ENCODE measurements at regions of chr2 and their contacts with region 1.

Region 1: DNA sequence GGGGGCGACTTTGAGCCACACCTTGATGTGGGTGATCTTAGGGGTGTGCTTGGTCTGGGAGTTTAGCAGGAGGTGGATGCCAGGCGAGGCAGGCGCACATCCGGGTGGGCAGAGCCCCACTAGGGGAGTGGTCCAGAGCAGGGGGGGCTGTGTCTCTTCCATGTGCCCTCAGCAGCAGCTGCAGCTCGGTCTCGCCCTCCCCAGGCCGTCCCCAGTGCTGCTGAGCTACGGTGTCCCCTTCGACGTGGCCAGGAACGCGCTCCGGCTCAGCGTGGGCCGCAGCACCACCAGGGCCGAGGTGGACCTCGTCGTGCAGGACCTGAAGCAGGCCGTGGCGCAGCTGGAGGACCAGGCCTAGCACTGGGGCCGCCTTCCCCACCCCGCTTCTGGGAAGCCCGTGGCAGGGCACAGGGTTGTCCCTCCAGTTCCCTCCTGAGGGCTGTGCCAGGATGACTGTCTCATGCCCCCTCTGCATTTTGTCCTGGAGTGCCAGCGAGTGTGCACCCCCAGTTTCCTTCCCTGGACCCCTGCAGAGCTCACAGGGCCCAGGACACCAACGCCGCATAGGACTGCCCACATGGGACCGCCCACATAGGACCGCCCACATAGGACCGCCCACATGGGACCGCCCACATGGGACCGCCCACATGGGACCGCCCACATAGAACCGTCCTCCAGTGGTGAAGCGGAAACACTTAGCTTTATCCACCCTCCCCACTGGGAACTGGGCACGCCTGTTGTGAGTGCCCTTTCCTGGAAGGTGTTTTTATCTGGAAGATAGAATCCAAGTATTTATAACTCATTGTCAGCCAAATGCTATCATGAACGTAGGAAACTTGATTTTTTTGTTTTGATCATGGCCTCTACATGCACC is 1.9 kb upstream of the ESPNL start:
- DNase-seq: peak in 2 of 35 experiments; percentile 26 to 35
- ATAC-seq: peak in 3 of 4 experiments; percentile 50 to 76 (median 56)
- H3K4me3 ChIP-seq: no peak overlapping the region
- H3K4me3 Mint-ChIP-seq: no peak overlapping the region
- H3K27ac ChIP-seq: no peak overlapping the region
- H3K27ac Mint-ChIP-seq: no peak overlapping the region
- H3K4me1 ChIP-seq: no peaks in the 10 kb centered on the region
- H3K4me1 Mint-ChIP-seq: peaks cover 0 to 6% (median 0%) of the 10 kb centered on the region in 3 donors
- H3K27me3 ChIP-seq: peaks cover 0 to 1% of the 10 kb centered on the region in 2 experiments
- H3K27me3 Mint-ChIP-seq: no peaks in the 10 kb centered on the region

Region 2: DNA sequence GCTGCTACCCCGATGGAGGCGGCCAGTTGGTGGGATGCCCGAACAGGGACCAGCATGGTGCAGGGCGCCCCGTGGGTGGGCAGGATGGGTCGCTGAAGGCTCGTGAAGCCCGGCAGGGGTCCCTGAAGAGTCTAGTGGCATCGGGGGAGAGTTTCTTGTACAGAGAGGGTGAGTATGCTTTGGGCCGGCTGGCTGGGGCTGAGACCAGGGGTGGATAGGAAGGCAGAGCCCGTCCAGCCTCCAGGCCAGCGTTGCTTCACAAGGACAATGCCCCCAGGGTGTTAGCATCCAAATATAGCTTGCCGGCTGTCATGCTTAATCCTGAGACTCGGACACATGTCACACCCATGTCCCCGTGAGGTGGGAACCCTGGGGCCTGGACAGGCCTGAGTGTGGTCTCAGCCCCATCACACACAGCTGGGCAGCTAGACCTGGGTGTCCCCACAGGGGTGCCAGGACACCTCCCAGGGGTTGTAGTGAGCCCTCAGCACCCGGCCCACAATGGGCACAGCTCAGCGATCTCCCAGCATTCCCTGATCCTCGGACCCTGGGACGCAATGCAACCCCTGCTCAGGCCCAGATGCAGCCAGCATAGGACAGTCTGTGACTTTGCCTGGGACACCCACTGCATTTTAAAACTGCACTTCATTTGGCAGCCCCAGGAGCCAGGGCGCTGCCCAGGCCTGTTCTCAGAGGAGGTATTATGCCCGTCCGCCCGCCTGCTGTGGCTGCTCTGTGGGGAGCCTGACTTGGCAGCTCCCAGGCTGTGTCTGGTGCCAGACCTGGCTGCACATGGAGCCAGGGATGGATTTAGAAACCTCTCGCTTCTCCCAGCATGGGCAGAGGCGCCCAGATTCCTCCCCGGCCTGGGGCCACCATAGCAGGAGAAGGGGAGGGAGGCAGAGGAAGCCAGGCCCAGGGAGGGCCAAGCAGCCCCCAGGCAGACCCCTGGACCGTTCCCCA is 202.4 kb before region 1 on chr2:
- CTCF ChIA-PET with region 1: no interaction called
- POLR2A ChIA-PET with region 1: no interaction called
- DNase-seq: no peak
- ATAC-seq: no peak
- H3K4me3 ChIP-seq: no peak overlapping the region
- H3K4me3 Mint-ChIP-seq: no peak overlapping the region
- H3K27ac ChIP-seq: no peak overlapping the region
- H3K27ac Mint-ChIP-seq: no peak overlapping the region
- H3K4me1 ChIP-seq: peaks cover 9 to 33% of the 10 kb centered on the region in 2 experiments
- H3K4me1 Mint-ChIP-seq: peaks cover 38 to 52% (median 43%) of the 10 kb centered on the region in 3 donors
- H3K27me3 ChIP-seq: no peaks in the 10 kb centered on the region
- H3K27me3 Mint-ChIP-seq: no peaks in the 10 kb centered on the region

Region 3: GRCh38 chr2:238108423-238109183 is 10.4 kb after region 1 on chr2:
- CTCF ChIA-PET with region 1: no interaction called
- POLR2A ChIA-PET with region 1: interaction called in 1 of 2 experiments, 16 read pairs
- DNase-seq: peak in 6 of 35 experiments; percentile 3 to 18 (median 12)
- ATAC-seq: peak in 2 of 4 experiments; percentile 43 to 58
- H3K4me3 ChIP-seq: no peak overlapping the region
- H3K4me3 Mint-ChIP-seq: peak overlapping the region in 1 of 3 donors; percentile 24
- H3K27ac ChIP-seq: no peak overlapping the region
- H3K27ac Mint-ChIP-seq: no peak overlapping the region
- H3K4me1 ChIP-seq: peaks cover 7 to 10% of the 10 kb centered on the region in 2 experiments
- H3K4me1 Mint-ChIP-seq: peaks cover 5 to 19% (median 12%) of the 10 kb centered on the region in 3 donors
- H3K27me3 ChIP-seq: peaks cover 0 to 10% of the 10 kb centered on the region in 2 experiments
- H3K27me3 Mint-ChIP-seq: no peaks in the 10 kb centered on the region